HCT116 (cell line): ENCODE measurements at regions of chr10 and their contacts with region 1.

Region 1: DNA sequence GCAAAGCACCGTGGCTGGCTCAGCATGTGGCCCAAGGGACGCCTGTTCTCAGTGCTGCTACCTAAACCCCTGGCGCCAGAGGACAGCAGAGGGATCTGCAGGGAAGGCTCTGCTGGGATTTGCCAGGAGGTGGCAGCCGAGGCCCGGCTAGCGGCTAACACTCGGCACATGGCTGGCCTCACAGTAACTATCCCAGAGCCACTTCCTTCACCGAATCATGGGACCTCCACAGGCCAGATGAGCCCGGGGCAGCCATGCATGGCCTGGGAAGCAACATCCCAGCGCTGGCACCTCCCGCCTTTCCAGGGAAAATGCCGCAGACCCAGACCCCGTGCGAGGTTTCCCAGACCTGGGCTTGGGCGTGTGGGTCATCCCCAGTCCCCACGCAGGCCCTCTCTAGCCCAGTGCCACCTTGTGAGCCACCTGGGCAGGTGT is 36.4 kb downstream of the DPYSL4 start:
- DNase-seq: peak; percentile 36
- ATAC-seq: peak; percentile 98
- H3K4me3 ChIP-seq: no peak overlapping the region
- H3K27ac ChIP-seq: no peak overlapping the region
- H3K4me1 ChIP-seq: no peaks in the 10 kb centered on the region
- H3K27me3 ChIP-seq: no peaks in the 10 kb centered on the region
- CTCF ChIP-seq: peak; percentile 66 to 98 (median 81)
- POLR2A ChIP-seq: no peak
- RAD21 ChIP-seq: peak; percentile 92

Region 2: DNA sequence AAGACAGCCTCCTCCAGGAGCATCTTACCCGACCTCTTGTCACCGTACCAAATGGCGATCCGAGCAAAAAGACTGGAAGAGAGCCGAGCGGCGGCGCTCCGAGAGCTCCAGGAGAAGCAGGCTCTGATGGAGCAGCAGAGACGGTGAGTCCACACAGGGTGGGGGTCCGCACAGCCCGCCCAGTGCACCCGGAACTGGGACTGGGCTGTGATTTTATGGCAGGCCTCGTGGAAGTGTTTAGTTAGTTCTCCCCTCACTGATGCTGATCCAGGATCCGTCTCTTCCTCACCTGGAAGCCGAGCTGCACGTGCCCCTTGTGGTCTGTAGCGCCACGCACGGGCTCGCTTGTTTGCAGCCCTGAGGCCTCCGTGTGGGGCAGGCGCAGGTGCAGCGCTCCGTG is 128.4 kb after region 1 on chr10:
- CTCF ChIA-PET with region 1: no interaction called
- POLR2A ChIA-PET with region 1: no interaction called
- RAD21 ChIA-PET with region 1: no interaction called
- intact Hi-C with region 1: loop called (anchors 1 kb)
- DNase-seq: no peak
- ATAC-seq: no peak
- H3K4me3 ChIP-seq: no peak overlapping the region
- H3K27ac ChIP-seq: no peak overlapping the region
- H3K4me1 ChIP-seq: no peaks in the 10 kb centered on the region
- H3K27me3 ChIP-seq: no peaks in the 10 kb centered on the region
- CTCF ChIP-seq: no peak
- POLR2A ChIP-seq: no peak
- RAD21 ChIP-seq: no peak

Region 3: DNA sequence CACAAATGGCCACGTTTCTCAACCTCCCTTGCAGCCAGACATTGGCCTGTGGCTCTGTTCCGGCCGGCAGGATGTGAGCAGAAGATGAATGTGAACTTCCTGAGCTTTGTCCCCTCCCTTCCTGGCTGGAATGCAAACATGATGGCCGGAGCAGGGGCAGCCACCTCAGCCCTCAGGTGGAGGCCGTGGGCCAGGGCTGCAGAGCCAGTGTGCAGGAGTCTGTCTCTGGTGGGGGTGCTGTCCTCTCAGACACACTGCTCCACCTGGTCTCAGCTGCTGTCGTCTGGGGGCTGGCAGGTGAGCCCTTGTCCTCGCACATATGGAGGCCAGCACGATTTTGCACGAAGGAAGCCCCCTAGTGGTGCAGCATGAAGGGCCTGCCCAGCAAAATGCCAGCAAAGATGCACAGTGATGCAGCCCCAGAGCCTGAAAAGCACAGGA is 148.5 kb after region 1 on chr10:
- CTCF ChIA-PET with region 1: interaction called, 3 read pairs
- POLR2A ChIA-PET with region 1: no interaction called
- RAD21 ChIA-PET with region 1: no interaction called
- intact Hi-C with region 1: loop called (anchors 1 kb)
- DNase-seq: peak; percentile 15
- ATAC-seq: peak; percentile 92
- H3K4me3 ChIP-seq: no peak overlapping the region
- H3K27ac ChIP-seq: no peak overlapping the region; the same call in 1 of the 2 replicates
- H3K4me1 ChIP-seq: peaks cover 3 to 6% of the 10 kb centered on the region in 2 experiments; a peak in 3 of 4 replicates
- H3K27me3 ChIP-seq: no peaks in the 10 kb centered on the region
- CTCF ChIP-seq: peak; percentile 52 to 69 (median 66)
- POLR2A ChIP-seq: no peak
- RAD21 ChIP-seq: peak; percentile 62

Region 4: DNA sequence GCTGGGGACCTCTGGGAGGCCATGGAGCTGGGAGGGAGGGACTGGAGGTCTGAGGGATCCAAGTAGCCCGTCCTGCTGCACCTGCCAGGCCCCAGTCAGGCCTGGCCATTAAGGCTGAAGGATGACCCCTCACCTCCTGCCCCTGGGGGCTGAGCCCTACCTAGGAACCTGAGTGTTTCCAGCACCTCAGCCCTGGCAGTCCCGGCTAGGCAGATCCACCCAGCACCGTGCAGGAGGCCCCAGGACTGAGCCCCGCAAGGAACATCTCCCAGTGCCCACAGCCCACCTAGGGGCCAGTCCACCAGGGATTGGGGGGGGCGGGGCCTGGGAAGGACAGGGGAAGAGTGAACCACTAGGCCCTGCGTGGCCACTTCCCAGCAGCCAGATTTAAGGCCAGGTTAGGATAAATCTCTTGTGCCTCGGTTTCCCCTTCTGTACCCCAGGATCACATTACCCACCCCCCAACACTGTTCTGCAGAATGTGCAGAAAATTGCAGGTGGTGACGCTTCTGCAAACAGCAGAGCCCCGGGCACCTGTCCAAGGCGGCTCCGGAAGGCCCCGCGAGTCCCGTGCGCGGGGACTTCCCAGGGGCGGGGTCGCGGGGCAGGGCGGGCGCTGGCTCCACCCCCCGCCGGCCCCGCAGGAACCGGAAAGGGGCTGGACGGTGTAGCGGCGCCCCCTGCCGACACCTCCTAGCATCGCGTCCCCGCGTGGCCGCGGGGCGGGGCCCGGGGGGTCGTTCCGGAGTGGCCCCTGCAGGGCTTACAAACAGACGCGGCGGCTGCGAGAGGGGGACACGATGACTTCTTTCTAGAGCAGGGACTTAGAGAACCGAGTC is 229.7 kb after region 1 on chr10:
- CTCF ChIA-PET with region 1: no interaction called
- POLR2A ChIA-PET with region 1: no interaction called
- RAD21 ChIA-PET with region 1: no interaction called
- intact Hi-C with region 1: loop called (anchors 2 kb)
- DNase-seq: no peak
- ATAC-seq: peak; percentile 64
- H3K4me3 ChIP-seq: peak overlapping the region in 1 of 2 experiments; percentile 26; a peak in 1 of 4 replicates
- H3K27ac ChIP-seq: peak overlapping the region; percentile 51; the same call in 1 of the 2 replicates
- H3K4me1 ChIP-seq: peaks cover 17 to 21% of the 10 kb centered on the region in 2 experiments
- H3K27me3 ChIP-seq: no peaks in the 10 kb centered on the region
- CTCF ChIP-seq: peak; percentile 59 to 78 (median 68)
- POLR2A ChIP-seq: no peak
- RAD21 ChIP-seq: peak; percentile 90